Activated CD4-positive, alpha-beta memory T cell treated with anti-CD3 and anti-CD28 coated beads for 36 hours (primary cell): ENCODE measurements at regions of chr2 and their contacts with region 1.

Region 1: GRCh38 chr2:171922230-171923022 is at the start of gene HAT1:
- DNase-seq: peak; percentile 99
- H3K4me3 Mint-ChIP-seq: peak within 1 kb of the TSS; percentile 97
- H3K27ac Mint-ChIP-seq: peak within 1 kb of the TSS; percentile 98
- H3K4me1 Mint-ChIP-seq: peaks cover 33% of the 10 kb centered on the region
- H3K27me3 Mint-ChIP-seq: no peaks in the 10 kb centered on the region
- total RNA-seq, gene HAT1: 86.2 to 90.8 TPM

Region 2: DNA sequence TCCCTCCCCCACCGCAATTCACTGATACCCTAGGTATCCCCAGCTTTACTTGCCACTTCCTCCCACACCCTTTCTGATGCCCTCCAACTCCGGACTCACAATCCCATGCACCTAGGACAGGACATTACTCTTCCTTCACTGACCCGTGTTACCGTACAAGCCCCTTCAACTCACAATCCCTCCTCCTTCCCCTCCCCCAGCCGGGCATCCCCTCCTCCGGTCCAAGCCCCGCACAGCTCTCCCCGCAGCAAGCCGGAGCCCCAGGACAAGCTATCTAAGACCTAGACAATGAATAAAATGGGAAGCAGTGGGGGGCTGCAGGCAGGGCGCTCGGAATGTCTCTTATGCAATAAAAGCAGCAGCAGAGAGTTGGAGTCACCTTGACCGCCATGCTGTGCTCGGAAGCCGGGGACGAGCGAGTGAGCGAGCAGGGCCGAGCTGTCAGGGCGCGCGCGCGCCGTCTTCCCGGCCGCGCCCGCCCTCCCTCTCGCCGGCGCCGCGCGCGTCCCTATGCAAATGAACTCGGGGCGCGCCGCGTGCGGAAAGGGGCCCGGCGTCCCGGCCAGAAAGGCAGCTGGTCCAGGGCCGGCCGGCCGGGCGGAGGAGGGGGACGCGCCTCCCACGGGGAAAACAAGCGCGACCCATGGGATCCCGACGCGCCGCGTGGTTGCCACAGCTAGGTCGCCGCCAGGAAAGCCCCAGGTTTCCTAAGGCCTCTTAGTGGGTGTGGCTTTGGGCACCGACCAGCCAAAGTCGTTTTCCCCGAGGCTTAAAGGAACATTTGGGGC is 28.4 kb before region 1 on chr2 and contains the start of gene SLC25A12:
- CTCF ChIA-PET with region 1: interaction called, 8 read pairs
- POLR2A ChIA-PET with region 1: interaction called, 4 read pairs
- intact Hi-C with region 1: loop called (anchors 1 kb)
- DNase-seq: peak; percentile 83
- H3K4me3 Mint-ChIP-seq: peak within 1 kb of the TSS; percentile 96
- H3K27ac Mint-ChIP-seq: peak within 1 kb of the TSS; percentile 91
- H3K4me1 Mint-ChIP-seq: peaks cover 26% of the 10 kb centered on the region
- H3K27me3 Mint-ChIP-seq: peaks cover 3% of the 10 kb centered on the region
- total RNA-seq, gene SLC25A12: 15.1 to 17.0 TPM

Region 3: GRCh38 chr2:171999604-172000469 is 77.4 kb after region 1 on chr2 and contains the start of gene METAP1D:
- CTCF ChIA-PET with region 1: no interaction called
- POLR2A ChIA-PET with region 1: no interaction called
- intact Hi-C with region 1: loop called (anchors 2 kb)
- DNase-seq: peak; percentile 91
- H3K4me3 Mint-ChIP-seq: peak within 1 kb of the TSS; percentile 93
- H3K27ac Mint-ChIP-seq: peak within 1 kb of the TSS; percentile 81
- H3K4me1 Mint-ChIP-seq: peaks cover 20% of the 10 kb centered on the region
- H3K27me3 Mint-ChIP-seq: peaks cover 6% of the 10 kb centered on the region
- total RNA-seq, gene METAP1D: 3.4 to 3.9 TPM

Region 4: GRCh38 chr2:172072303-172072702 is 149.9 kb after region 1 on chr2:
- CTCF ChIA-PET with region 1: no interaction called
- POLR2A ChIA-PET with region 1: no interaction called
- intact Hi-C with region 1: no loop called
- DNase-seq: no peak
- H3K4me3 Mint-ChIP-seq: no peak overlapping the region
- H3K27ac Mint-ChIP-seq: no peak overlapping the region
- H3K4me1 Mint-ChIP-seq: no peaks in the 10 kb centered on the region
- H3K27me3 Mint-ChIP-seq: peaks cover 5% of the 10 kb centered on the region

Region 5: GRCh38 chr2:172200495-172201085 is 278.2 kb after region 1 on chr2:
- CTCF ChIA-PET with region 1: no interaction called
- POLR2A ChIA-PET with region 1: no interaction called
- intact Hi-C with region 1: no loop called
- DNase-seq: no peak
- H3K4me3 Mint-ChIP-seq: no peak overlapping the region
- H3K27ac Mint-ChIP-seq: no peak overlapping the region
- H3K4me1 Mint-ChIP-seq: peaks cover 10% of the 10 kb centered on the region
- H3K27me3 Mint-ChIP-seq: peaks cover 14% of the 10 kb centered on the region

Region 6: DNA sequence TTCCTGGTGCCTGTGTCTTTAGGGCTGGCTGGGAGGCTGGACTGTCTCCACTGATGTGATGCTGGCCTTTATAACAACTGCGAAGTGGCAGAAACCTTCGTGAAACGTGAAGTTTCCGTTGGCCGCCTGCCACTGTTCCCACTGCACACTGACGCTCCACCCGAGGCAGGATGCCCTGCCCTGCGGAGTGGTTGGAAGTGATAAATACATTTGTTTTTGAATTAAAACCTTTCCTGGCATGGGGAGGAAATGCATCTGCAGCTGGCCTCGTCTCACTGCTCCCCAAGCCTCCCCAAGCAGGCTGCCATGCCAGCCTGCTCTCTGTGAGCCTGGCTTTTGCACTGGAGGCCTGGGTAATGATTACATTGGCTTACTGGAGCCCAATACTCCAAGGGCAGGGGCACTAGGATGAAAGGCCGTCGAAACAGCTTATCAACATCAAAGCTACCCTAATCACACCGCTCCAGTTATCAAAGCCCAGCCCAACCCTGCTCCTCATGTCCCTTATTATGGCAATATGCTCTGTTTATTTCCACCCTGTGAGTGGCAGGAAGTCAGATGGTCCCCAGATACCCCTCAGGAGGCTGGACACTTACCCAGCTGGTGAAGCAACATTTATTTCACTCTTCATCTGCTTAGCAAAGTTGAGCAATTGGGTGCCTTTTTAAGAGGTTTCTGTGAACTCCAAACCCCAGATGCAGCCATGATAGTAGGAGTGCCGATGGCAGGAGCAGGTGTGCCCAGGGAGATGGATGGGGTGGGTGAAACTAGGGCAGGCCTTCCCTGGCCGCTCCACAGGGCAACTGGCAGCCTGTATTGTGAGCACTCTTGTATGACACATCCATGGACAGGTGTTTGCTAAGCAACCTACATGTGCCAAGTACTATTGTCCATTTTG is 407.6 kb after region 1 on chr2:
- CTCF ChIA-PET with region 1: no interaction called
- POLR2A ChIA-PET with region 1: no interaction called
- intact Hi-C with region 1: no loop called
- DNase-seq: no peak
- H3K4me3 Mint-ChIP-seq: no peak overlapping the region
- H3K27ac Mint-ChIP-seq: no peak overlapping the region
- H3K4me1 Mint-ChIP-seq: no peaks in the 10 kb centered on the region
- H3K27me3 Mint-ChIP-seq: no peaks in the 10 kb centered on the region

Region 7: GRCh38 chr2:172555522-172556283 is 633.3 kb after region 1 on chr2 and contains the start of gene PDK1:
- CTCF ChIA-PET with region 1: no interaction called
- POLR2A ChIA-PET with region 1: no interaction called
- intact Hi-C with region 1: loop called (anchors 2 kb)
- DNase-seq: peak; percentile 93
- H3K4me3 Mint-ChIP-seq: peak within 1 kb of the TSS; percentile 90
- H3K27ac Mint-ChIP-seq: peak within 1 kb of the TSS; percentile 90
- H3K4me1 Mint-ChIP-seq: peaks cover 45% of the 10 kb centered on the region
- H3K27me3 Mint-ChIP-seq: peaks cover 6% of the 10 kb centered on the region
- total RNA-seq, gene PDK1: 24.7 to 31.6 TPM